Psoas muscle (tissue), 8 donors: ENCODE measurements at regions of chr2 and their contacts with region 1.

Region 1: GRCh38 chr2:37274359-37274965 is 43.0 kb downstream of the NDUFAF7 start:
- DNase-seq: no peak
- ATAC-seq: no peak
- H3K4me3 ChIP-seq: no peak overlapping the region
- H3K27ac ChIP-seq: no peak overlapping the region
- H3K4me1 ChIP-seq: no peaks in the 10 kb centered on the region
- H3K27me3 ChIP-seq: no peaks in the 10 kb centered on the region
- CTCF ChIP-seq: no peak

Region 2: GRCh38 chr2:36861896-36862295 is 412.6 kb before region 1 on chr2:
- intact Hi-C with region 1: loop called in 1 of 2 experiments (anchors 10 kb)
- DNase-seq: no peak
- ATAC-seq: no peak
- H3K4me3 ChIP-seq: no peak overlapping the region
- H3K27ac ChIP-seq: no peak overlapping the region
- H3K4me1 ChIP-seq: no peaks in the 10 kb centered on the region
- H3K27me3 ChIP-seq: no peaks in the 10 kb centered on the region
- CTCF ChIP-seq: no peak

Region 3: DNA sequence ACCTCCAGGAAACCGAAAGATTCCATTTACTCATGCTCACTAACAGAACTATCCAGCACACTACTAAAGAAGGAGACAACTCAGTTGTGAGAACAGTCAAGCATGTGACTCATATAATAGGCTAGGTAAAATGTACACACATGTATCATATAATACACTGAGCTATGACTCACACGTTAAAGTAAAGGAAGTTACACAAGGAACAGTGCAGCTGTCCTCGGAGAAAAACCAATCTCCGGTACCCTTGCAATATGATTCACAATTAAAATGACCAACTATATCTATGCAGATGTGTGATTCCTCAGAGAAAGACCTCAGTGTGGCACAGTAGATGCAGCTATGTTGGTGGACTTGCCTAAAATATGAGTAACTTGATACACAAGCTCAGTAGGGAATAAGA is 384.7 kb before region 1 on chr2:
- intact Hi-C with region 1: no loop called
- DNase-seq: no peak
- ATAC-seq: peak; percentile 81 to 96 (median 86)
- H3K4me3 ChIP-seq: no peak overlapping the region
- H3K27ac ChIP-seq: peak overlapping the region; percentile 42
- H3K4me1 ChIP-seq: no peaks in the 10 kb centered on the region
- H3K27me3 ChIP-seq: no peaks in the 10 kb centered on the region
- CTCF ChIP-seq: no peak

Region 4: GRCh38 chr2:37570773-37571586 is 296.5 kb after region 1 on chr2:
- intact Hi-C with region 1: no loop called
- DNase-seq: peak; percentile 28 to 60
- ATAC-seq: peak; percentile 87 to 92 (median 90)
- H3K4me3 ChIP-seq: no peak overlapping the region
- H3K27ac ChIP-seq: peak overlapping the region; percentile 42
- H3K4me1 ChIP-seq: peaks cover 16% of the 10 kb centered on the region
- H3K27me3 ChIP-seq: no peaks in the 10 kb centered on the region
- CTCF ChIP-seq: no peak